ENCODE measurements at regions of chr12 and their contacts with region 1.

Region 1: GRCh38 chr12:57182921-57183790 is 33.4 kb upstream of the NXPH4 start:
- DNase-seq: peak; percentile 66 to 88 (median 79)
- ATAC-seq: peak; percentile 100
- H3K4me3 ChIP-seq: no peak overlapping the region
- H3K4me3 Mint-ChIP-seq: no peak overlapping the region
- H3K27ac ChIP-seq: no peak overlapping the region
- H3K27ac Mint-ChIP-seq: no peak overlapping the region
- H3K4me1 ChIP-seq: peaks cover 6% of the 10 kb centered on the region
- H3K4me1 Mint-ChIP-seq: no peaks in the 10 kb centered on the region
- H3K27me3 ChIP-seq: no peaks in the 10 kb centered on the region
- H3K27me3 Mint-ChIP-seq: no peaks in the 10 kb centered on the region
- CTCF ChIP-seq: peak; percentile 80

Region 2: GRCh38 chr12:57005980-57006808 is 177.0 kb before region 1 on chr12 and contains the start of gene ZBTB39:
- CTCF ChIA-PET with region 1: no interaction called
- POLR2A ChIA-PET with region 1: no interaction called
- intact Hi-C with region 1: loop called (anchors 5 kb)
- DNase-seq: peak; percentile 32 to 90 (median 60)
- ATAC-seq: peak; percentile 74
- H3K4me3 ChIP-seq: peak within 1 kb of the TSS; percentile 76
- H3K4me3 Mint-ChIP-seq: peak within 1 kb of the TSS; percentile 93
- H3K27ac ChIP-seq: peak within 1 kb of the TSS; percentile 33 to 47
- H3K27ac Mint-ChIP-seq: peak within 1 kb of the TSS; percentile 81
- H3K4me1 ChIP-seq: peaks cover 51% of the 10 kb centered on the region
- H3K4me1 Mint-ChIP-seq: peaks cover 66% of the 10 kb centered on the region
- H3K27me3 ChIP-seq: no peaks in the 10 kb centered on the region
- H3K27me3 Mint-ChIP-seq: no peaks in the 10 kb centered on the region
- CTCF ChIP-seq: peak; percentile 49
- total RNA-seq, gene ZBTB39: 6.9 to 8.0 TPM

Region 3: DNA sequence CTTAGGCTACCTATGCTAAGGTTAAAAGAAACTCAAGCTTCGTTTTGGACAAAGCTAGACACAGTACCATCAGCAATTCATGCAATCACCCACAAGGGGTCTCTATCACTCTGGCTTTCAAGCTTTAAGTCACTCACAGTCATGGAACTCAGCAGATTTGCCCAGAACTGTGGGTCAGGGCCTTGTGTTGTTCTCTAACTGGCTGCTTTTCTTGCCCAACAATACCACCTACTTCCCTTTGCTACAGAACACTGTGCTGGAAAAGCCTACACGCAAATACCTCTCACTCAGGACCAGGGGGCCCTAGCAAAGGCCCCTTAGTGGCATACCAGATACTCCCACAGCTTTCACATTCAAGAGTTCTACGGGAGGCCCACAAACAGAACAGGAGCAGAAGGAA is 113.6 kb before region 1 on chr12:
- CTCF ChIA-PET with region 1: interaction called, 11 read pairs
- POLR2A ChIA-PET with region 1: interaction called, 3 read pairs
- intact Hi-C with region 1: loop called (anchors 1 to 2 kb)
- DNase-seq: peak in 13 of 14 experiments; percentile 20 to 89 (median 51)
- ATAC-seq: peak; percentile 99
- H3K4me3 ChIP-seq: no peak overlapping the region
- H3K4me3 Mint-ChIP-seq: peak overlapping the region; percentile 18
- H3K27ac ChIP-seq: peak overlapping the region; percentile 34 to 38
- H3K27ac Mint-ChIP-seq: peak overlapping the region; percentile 81
- H3K4me1 ChIP-seq: peaks cover 9% of the 10 kb centered on the region
- H3K4me1 Mint-ChIP-seq: peaks cover 31% of the 10 kb centered on the region
- H3K27me3 ChIP-seq: no peaks in the 10 kb centered on the region
- H3K27me3 Mint-ChIP-seq: no peaks in the 10 kb centered on the region
- CTCF ChIP-seq: peak; percentile 87

Measured in CD4-positive, alpha-beta T cell (primary cell).